ENCODE measurements at regions of chr6 and their contacts with region 1.

Region 1: DNA sequence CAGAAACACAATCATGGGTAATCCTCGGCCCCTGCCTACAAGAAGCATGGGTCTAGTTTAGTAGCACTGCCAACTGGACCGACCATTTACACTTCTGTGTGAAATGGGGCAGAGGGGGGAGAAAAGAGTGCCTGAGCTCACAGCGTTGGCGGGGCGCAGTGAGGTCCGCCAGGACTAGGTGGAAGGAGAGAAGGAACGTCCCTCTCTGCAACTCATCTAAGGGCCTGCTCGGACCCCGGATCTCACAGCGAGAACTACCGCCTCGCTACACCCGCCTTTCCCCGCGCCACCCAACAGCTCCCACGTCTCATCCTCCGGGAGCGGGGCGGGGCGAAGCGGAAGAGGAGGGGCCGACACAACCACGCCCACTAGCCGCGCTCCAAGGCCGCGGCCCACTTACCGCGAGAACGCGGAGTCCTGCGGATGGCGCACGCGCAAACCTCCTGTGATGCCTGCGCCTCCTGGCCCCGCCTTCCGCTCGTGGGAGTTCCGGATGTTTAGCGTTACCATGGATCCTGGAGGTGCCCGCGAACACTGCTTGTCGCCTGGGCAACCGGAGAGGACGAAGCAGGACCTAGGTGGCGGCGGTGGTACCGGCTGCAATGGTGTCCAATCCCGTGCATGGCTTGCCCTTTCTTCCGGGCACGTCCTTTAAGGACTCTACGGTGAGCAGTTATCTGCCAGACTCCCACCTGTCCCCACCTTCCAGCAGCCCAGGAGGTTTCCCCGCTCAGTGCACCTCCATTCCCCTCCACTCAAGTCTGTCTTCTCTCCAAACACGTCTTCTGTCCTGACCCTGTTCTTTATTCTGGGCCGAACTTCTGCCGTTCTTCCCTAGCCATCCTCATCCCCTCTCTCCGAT is at the start of gene EFHC1:
- DNase-seq: peak; percentile 99
- H3K4me3 ChIP-seq: peak within 1 kb of the TSS; percentile 32 to 69 (median 33)
- H3K27ac ChIP-seq: peak within 1 kb of the TSS; percentile 57 to 74 (median 72)
- H3K4me1 ChIP-seq: peaks cover 7 to 26% of the 10 kb centered on the region in 2 donors
- H3K27me3 ChIP-seq: no peaks in the 10 kb centered on the region
- CTCF ChIP-seq: no peak
- POLR2A ChIP-seq: peak; percentile 22 to 91
- total RNA-seq, gene EFHC1: 39.4 to 96.5 (median 41.6) TPM

Region 2: DNA sequence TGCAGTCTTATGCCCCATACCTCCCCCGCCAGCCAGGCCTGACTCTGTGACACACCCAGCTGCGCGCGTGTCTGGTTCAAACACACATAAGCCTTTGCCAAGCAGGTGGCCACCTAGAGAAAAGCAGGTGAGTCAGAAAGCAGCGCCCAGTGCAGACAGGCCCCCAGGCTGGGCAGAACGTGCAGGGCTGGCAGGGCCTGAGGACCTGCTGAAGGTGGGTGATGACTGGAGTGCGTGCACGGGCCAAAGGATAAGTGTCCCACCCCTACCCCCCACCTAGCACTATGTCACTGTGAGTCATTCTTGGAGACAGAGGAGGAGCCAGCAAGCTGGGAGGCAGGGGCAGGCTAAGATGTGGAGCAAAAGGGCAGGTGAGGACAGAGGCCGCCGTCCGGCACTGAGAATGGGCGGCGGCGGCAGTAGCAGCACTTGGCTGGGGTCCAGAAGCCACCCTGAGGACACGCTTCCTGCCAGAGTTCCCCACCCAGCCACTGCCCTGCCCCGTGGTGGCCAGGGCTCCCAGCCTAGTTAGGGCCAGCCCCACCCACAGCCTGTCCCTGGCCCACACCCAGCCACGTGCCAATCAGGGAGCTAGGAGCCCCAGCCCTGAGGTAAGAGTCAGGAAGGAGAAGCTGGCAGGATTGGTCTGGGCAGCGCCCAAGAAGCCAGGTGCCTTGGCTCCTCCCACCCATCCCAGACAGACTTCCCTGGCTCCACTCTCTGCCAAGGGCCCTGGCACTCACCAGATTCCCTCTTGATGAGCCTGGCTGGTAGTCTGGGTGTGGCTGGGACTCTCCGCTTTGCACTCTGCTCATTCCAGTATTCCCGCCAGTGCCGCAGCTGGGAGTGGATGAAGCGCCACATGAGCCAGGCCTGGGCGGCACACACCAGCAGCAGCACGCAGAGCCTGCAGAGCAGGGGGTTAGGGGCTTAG is 84.1 kb after region 1 on chr6:
- intact Hi-C with region 1: loop called (anchors 5 kb)
- DNase-seq: peak; percentile 99
- H3K4me3 ChIP-seq: no peak overlapping the region
- H3K27ac ChIP-seq: peak overlapping the region; percentile 68 to 76 (median 71)
- H3K4me1 ChIP-seq: peaks cover 7 to 37% of the 10 kb centered on the region in 2 donors
- H3K27me3 ChIP-seq: no peaks in the 10 kb centered on the region
- CTCF ChIP-seq: no peak
- POLR2A ChIP-seq: no peak

Measured in thyroid gland (tissue), 4 donors.